CD4-positive, alpha-beta T cell (primary cell): ENCODE measurements at regions of chr6 and their contacts with region 1.

Region 1: GRCh38 chr6:142692942-142693341 is 252.0 kb downstream of the HIVEP2 start:
- DNase-seq: peak; percentile 43 to 82 (median 62)
- ATAC-seq: peak; percentile 89
- H3K4me3 ChIP-seq: no peak overlapping the region
- H3K4me3 Mint-ChIP-seq: no peak overlapping the region
- H3K27ac ChIP-seq: no peak overlapping the region
- H3K27ac Mint-ChIP-seq: no peak overlapping the region
- H3K4me1 ChIP-seq: peaks cover 8% of the 10 kb centered on the region
- H3K4me1 Mint-ChIP-seq: peaks cover 21% of the 10 kb centered on the region
- H3K27me3 ChIP-seq: no peaks in the 10 kb centered on the region
- H3K27me3 Mint-ChIP-seq: no peaks in the 10 kb centered on the region
- CTCF ChIP-seq: peak; percentile 96

Region 2: GRCh38 chr6:142551274-142551811 is 141.6 kb before region 1 on chr6:
- CTCF ChIA-PET with region 1: no interaction called
- POLR2A ChIA-PET with region 1: no interaction called
- intact Hi-C with region 1: no loop called
- DNase-seq: peak in 13 of 14 experiments; percentile 9 to 69 (median 47)
- ATAC-seq: peak; percentile 99
- H3K4me3 ChIP-seq: no peak overlapping the region
- H3K4me3 Mint-ChIP-seq: peak overlapping the region; percentile 40
- H3K27ac ChIP-seq: no peak overlapping the region
- H3K27ac Mint-ChIP-seq: no peak overlapping the region
- H3K4me1 ChIP-seq: peaks cover 5% of the 10 kb centered on the region
- H3K4me1 Mint-ChIP-seq: peaks cover 36% of the 10 kb centered on the region
- H3K27me3 ChIP-seq: no peaks in the 10 kb centered on the region
- H3K27me3 Mint-ChIP-seq: no peaks in the 10 kb centered on the region
- CTCF ChIP-seq: no peak

Region 3: DNA sequence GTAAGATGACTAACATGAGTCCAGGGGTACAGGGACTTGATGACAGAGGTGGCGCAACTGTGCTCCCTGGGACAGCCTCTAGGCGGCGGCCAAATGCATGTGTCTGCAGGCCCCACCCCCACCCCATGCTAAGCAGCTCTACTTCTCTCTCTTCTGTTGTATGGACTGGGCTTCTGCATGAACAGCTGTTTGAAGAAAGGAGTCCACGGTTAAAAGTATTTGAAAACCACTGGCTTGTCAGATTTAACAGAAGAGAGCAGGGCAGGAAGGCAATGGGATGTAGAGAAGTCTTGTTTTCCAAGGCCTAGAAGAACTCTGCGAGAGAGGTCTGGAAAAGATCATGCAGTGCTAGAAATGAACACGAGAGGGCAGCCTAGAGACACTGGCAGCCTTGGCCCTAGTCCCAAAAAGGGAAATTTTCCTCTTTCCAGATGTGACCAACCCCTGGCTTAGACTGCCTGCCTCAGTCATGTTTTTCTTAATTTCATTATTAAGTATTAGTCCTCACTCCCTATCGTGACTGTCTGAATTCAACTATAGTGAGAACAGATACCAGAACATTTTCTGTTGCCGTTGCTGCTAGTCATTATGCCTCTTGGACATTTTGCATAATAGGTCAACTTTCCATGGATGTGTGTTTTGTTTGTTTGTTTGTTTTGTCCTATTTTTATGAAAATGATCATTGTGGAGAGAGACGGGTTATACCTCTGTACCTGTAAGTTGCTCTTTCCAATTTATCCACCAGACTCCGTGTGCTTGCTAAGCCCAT is 126.1 kb before region 1 on chr6:
- CTCF ChIA-PET with region 1: no interaction called
- POLR2A ChIA-PET with region 1: no interaction called
- intact Hi-C with region 1: loop called (anchors 5 to 10 kb)
- DNase-seq: peak; percentile 14 to 76 (median 47)
- ATAC-seq: peak; percentile 62
- H3K4me3 ChIP-seq: no peak overlapping the region
- H3K4me3 Mint-ChIP-seq: peak overlapping the region; percentile 57
- H3K27ac ChIP-seq: no peak overlapping the region
- H3K27ac Mint-ChIP-seq: peak overlapping the region; percentile 79
- H3K4me1 ChIP-seq: peaks cover 35% of the 10 kb centered on the region
- H3K4me1 Mint-ChIP-seq: peaks cover 77% of the 10 kb centered on the region
- H3K27me3 ChIP-seq: no peaks in the 10 kb centered on the region
- H3K27me3 Mint-ChIP-seq: no peaks in the 10 kb centered on the region
- CTCF ChIP-seq: peak; percentile 82

Region 4: GRCh38 chr6:142952614-142953013 is 259.7 kb after region 1 on chr6:
- CTCF ChIA-PET with region 1: no interaction called
- POLR2A ChIA-PET with region 1: no interaction called
- intact Hi-C with region 1: loop called (anchors 1 kb)
- DNase-seq: peak in 1 of 14 experiments; percentile 46
- ATAC-seq: no peak
- H3K4me3 ChIP-seq: no peak overlapping the region
- H3K4me3 Mint-ChIP-seq: no peak overlapping the region
- H3K27ac ChIP-seq: no peak overlapping the region
- H3K27ac Mint-ChIP-seq: peak overlapping the region; percentile 98
- H3K4me1 ChIP-seq: no peaks in the 10 kb centered on the region
- H3K4me1 Mint-ChIP-seq: peaks cover 30% of the 10 kb centered on the region
- H3K27me3 ChIP-seq: no peaks in the 10 kb centered on the region
- H3K27me3 Mint-ChIP-seq: no peaks in the 10 kb centered on the region
- CTCF ChIP-seq: no peak

Region 5: GRCh38 chr6:143279385-143279784 is 586.4 kb after region 1 on chr6:
- CTCF ChIA-PET with region 1: interaction called, 3 read pairs
- POLR2A ChIA-PET with region 1: no interaction called
- intact Hi-C with region 1: loop called (anchors 2 kb)
- DNase-seq: peak in 4 of 14 experiments; percentile 3 to 25 (median 13)
- ATAC-seq: no peak
- H3K4me3 ChIP-seq: no peak overlapping the region
- H3K4me3 Mint-ChIP-seq: no peak overlapping the region
- H3K27ac ChIP-seq: no peak overlapping the region
- H3K27ac Mint-ChIP-seq: no peak overlapping the region
- H3K4me1 ChIP-seq: no peaks in the 10 kb centered on the region
- H3K4me1 Mint-ChIP-seq: no peaks in the 10 kb centered on the region
- H3K27me3 ChIP-seq: no peaks in the 10 kb centered on the region
- H3K27me3 Mint-ChIP-seq: no peaks in the 10 kb centered on the region
- CTCF ChIP-seq: no peak

Region 6: GRCh38 chr6:143427109-143427817 is 734.3 kb after region 1 on chr6:
- CTCF ChIA-PET with region 1: interaction called, 20 read pairs
- POLR2A ChIA-PET with region 1: interaction called, 4 read pairs
- intact Hi-C with region 1: loop called (anchors 1 kb)
- DNase-seq: peak; percentile 59 to 84 (median 67)
- ATAC-seq: peak; percentile 100
- H3K4me3 ChIP-seq: no peak overlapping the region
- H3K4me3 Mint-ChIP-seq: no peak overlapping the region
- H3K27ac ChIP-seq: no peak overlapping the region
- H3K27ac Mint-ChIP-seq: peak overlapping the region; percentile 14
- H3K4me1 ChIP-seq: no peaks in the 10 kb centered on the region
- H3K4me1 Mint-ChIP-seq: no peaks in the 10 kb centered on the region
- H3K27me3 ChIP-seq: no peaks in the 10 kb centered on the region
- H3K27me3 Mint-ChIP-seq: no peaks in the 10 kb centered on the region
- CTCF ChIP-seq: peak; percentile 88